Caco-2 (cell line): ENCODE measurements at regions of chr5 and their contacts with region 1.

Region 1: GRCh38 chr5:138594305-138595058 is 19.3 kb upstream of the HSPA9 start:
- DNase-seq: no peak
- H3K4me3 ChIP-seq: no peak overlapping the region
- H3K4me3 Mint-ChIP-seq: no peak overlapping the region
- H3K27ac Mint-ChIP-seq: no peak overlapping the region
- H3K4me1 ChIP-seq: no peaks in the 10 kb centered on the region
- H3K4me1 Mint-ChIP-seq: no peaks in the 10 kb centered on the region
- H3K27me3 ChIP-seq: no peaks in the 10 kb centered on the region
- H3K27me3 Mint-ChIP-seq: no peaks in the 10 kb centered on the region
- CTCF ChIP-seq: peak in 1 of 2 experiments; percentile 29

Region 2: GRCh38 chr5:138632900-138633489 is 38.5 kb after region 1 on chr5:
- CTCF ChIA-PET with region 1: no interaction called
- POLR2A ChIA-PET with region 1: no interaction called
- intact Hi-C with region 1: loop called (anchors 1 kb)
- DNase-seq: peak; percentile 56 to 76
- H3K4me3 ChIP-seq: no peak overlapping the region
- H3K4me3 Mint-ChIP-seq: no peak overlapping the region
- H3K27ac Mint-ChIP-seq: no peak overlapping the region
- H3K4me1 ChIP-seq: peaks cover 6% of the 10 kb centered on the region; the same call in 1 of the 2 replicates
- H3K4me1 Mint-ChIP-seq: peaks cover 7% of the 10 kb centered on the region
- H3K27me3 ChIP-seq: no peaks in the 10 kb centered on the region
- H3K27me3 Mint-ChIP-seq: no peaks in the 10 kb centered on the region
- CTCF ChIP-seq: peak; percentile 10 to 30